ENCODE measurements at regions of chr6 and their contacts with region 1.

Region 1: DNA sequence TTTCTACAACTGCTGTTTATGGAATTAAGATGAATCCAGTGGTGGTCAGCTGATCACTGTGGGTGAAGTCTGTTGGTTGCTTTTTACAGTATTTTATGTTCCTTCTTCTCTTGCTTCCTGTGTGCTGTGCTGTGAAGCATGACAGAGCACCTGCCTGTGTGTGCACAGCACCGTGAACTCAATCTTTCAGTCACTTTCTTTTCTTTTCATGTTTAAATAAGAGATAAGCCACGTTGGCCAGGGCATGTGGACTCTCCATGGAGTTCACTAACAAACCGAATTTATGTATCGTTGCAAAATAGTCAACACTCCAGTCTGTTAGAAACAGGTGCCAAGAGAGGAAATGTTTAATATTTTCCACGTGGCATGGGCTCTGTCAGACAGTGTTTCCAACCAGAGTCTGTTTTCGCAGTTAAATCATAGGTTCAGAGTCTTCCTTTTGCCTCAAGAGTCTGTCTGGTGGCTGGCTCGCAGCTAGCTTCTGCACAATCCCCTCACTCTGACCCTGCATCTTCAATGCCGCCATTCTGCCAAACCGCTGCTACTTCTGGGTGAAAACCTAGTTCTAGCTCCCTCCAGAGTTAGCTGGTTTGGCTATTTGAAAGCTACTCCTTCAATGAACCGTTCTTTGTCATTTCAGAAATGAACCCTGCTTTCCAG is 73.2 kb downstream of the QRSL1 start:
- DNase-seq: peak; percentile 99
- H3K4me3 ChIP-seq: peak overlapping the region; percentile 61
- H3K27ac ChIP-seq: peak overlapping the region; percentile 99
- H3K4me1 ChIP-seq: peaks cover 65% of the 10 kb centered on the region
- CTCF ChIP-seq: no peak

Region 2: DNA sequence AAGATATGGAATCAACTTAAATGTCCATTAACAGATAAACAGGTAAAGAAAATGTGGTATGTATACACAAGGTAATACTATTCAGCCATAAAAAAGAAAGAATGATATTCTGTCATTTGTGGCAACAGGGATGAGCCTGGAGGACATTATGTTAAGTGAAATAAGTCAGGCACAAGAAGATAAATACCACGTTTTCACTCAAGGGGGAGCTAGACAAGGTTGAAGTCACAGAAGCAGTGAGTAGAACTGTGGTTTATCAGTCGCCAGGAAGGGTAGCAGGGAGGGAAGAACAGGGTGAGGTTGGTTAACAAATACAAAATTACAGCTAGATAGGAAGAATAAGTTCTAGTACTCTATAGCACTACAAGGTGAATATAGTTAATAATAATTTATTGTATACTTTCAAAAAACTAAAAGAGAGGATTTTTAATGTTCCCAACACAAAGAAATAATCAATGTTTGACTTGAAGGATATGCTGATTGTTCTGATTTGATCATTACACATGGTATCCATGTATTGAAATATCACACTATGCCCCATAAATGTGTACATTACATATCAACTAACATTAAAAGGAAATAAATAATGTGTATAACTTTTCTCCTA is 94.4 kb before region 1 on chr6:
- CTCF ChIA-PET with region 1: no interaction called
- POLR2A ChIA-PET with region 1: interaction called, 3 read pairs
- intact Hi-C with region 1: loop called (anchors 5 kb)
- DNase-seq: peak; percentile 82
- H3K4me3 ChIP-seq: no peak overlapping the region
- H3K27ac ChIP-seq: no peak overlapping the region
- H3K4me1 ChIP-seq: peaks cover 51% of the 10 kb centered on the region
- CTCF ChIP-seq: peak; percentile 87

Region 3: GRCh38 chr6:106637717-106638341 is 64.8 kb before region 1 on chr6:
- CTCF ChIA-PET with region 1: interaction called, 3 read pairs
- POLR2A ChIA-PET with region 1: interaction called, 14 read pairs
- intact Hi-C with region 1: loop called (anchors 2 kb)
- DNase-seq: peak; percentile 90
- H3K4me3 ChIP-seq: peak overlapping the region; percentile 57
- H3K27ac ChIP-seq: peak overlapping the region; percentile 99
- H3K4me1 ChIP-seq: peaks cover 84% of the 10 kb centered on the region
- CTCF ChIP-seq: no peak

Region 4: DNA sequence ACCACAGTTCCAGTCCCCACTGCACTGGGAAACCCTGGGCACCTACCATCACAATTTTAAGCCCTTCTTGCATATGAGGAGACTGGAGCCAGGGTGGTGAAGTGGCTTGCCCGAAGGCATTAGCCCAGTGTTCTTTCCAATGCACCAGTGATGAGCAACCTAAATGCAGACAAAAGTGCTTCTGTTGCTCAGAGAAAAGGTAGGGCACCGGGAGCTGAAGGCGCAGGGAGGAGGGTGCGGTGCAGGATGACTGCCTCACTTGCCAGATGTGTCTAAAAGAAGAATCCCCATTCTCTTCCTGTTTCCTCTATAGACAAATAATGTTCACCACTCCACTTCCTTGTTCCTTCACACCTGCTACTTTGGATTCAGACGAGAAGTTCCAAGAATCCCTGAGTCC is 13.3 kb after region 1 on chr6:
- CTCF ChIA-PET with region 1: interaction called, 6 read pairs
- POLR2A ChIA-PET with region 1: interaction called, 64 read pairs
- intact Hi-C with region 1: loop called (anchors 1 kb)
- DNase-seq: peak; percentile 84
- H3K4me3 ChIP-seq: peak overlapping the region; percentile 61
- H3K27ac ChIP-seq: peak overlapping the region; percentile 93
- H3K4me1 ChIP-seq: peaks cover 73% of the 10 kb centered on the region
- CTCF ChIP-seq: no peak

Region 5: DNA sequence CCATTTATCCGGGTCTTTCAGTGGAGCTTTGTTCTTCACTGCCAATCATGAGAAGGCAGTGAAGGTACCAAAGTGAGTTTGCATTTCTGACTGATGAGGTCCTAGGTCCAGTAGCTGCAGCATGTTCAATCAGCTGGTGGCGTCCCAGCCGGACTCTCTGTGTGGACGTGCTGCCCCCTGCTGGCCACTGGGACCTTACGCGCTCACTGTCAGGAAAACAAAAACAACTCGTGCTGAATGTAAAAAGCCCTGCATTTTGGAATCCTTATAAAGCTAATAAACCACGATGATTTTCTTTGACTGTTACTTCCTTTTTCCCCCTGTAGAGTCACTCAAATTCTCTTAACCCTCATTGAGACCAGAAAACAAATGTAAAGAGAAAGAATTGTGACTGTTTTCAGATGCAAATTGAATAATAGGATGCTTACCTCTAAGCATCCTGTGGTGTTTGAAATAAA is 276.9 kb after region 1 on chr6:
- CTCF ChIA-PET with region 1: no interaction called
- POLR2A ChIA-PET with region 1: interaction called, 3 read pairs
- intact Hi-C with region 1: loop called (anchors 1 kb)
- DNase-seq: peak; percentile 91
- H3K4me3 ChIP-seq: no peak overlapping the region
- H3K27ac ChIP-seq: no peak overlapping the region
- H3K4me1 ChIP-seq: peaks cover 27% of the 10 kb centered on the region
- CTCF ChIP-seq: peak; percentile 99